ENCODE measurements at regions of chr5 and their contacts with region 1.

Region 1: DNA sequence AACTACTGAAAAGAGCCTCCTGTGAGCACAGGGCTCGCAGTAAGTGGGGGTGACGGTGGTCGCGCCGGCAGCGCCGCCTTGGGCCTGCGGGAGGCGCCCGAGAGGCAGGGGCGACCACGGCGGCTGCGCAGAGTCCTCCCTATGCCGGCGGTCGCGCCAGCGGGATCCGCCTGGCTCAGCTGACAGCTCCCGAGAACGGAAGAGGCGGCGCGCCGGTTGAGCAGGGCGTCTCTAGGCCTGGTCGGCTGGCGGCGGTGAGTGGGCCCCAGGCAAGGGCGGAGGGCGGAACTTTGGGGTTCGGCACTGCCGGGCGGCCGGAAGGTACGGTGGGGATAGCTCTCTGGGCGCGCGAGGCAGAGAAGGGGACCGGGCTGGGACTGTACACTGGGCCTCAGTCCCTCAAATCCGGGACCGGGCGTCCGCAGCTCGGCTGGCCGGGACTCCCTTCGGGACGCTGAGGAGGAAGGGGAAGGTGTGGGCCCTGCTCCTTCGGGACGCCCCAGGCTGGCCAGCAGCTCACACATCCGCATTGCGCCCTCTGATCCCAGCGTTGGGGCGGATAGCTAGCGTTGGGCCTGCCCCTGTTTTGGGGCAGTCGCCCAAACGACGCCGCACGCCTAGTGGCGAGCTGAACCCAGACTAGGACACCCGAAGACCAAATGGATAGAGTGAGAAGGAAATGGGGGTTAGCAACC is at the start of gene RNF14:
- DNase-seq: peak; percentile 96
- H3K4me3 Mint-ChIP-seq: peak within 1 kb of the TSS; percentile 93
- H3K27ac Mint-ChIP-seq: peak within 1 kb of the TSS; percentile 91
- H3K4me1 Mint-ChIP-seq: peaks cover 37% of the 10 kb centered on the region
- H3K27me3 Mint-ChIP-seq: no peaks in the 10 kb centered on the region
- total RNA-seq, gene RNF14: 29.8 to 35.6 TPM

Region 2: DNA sequence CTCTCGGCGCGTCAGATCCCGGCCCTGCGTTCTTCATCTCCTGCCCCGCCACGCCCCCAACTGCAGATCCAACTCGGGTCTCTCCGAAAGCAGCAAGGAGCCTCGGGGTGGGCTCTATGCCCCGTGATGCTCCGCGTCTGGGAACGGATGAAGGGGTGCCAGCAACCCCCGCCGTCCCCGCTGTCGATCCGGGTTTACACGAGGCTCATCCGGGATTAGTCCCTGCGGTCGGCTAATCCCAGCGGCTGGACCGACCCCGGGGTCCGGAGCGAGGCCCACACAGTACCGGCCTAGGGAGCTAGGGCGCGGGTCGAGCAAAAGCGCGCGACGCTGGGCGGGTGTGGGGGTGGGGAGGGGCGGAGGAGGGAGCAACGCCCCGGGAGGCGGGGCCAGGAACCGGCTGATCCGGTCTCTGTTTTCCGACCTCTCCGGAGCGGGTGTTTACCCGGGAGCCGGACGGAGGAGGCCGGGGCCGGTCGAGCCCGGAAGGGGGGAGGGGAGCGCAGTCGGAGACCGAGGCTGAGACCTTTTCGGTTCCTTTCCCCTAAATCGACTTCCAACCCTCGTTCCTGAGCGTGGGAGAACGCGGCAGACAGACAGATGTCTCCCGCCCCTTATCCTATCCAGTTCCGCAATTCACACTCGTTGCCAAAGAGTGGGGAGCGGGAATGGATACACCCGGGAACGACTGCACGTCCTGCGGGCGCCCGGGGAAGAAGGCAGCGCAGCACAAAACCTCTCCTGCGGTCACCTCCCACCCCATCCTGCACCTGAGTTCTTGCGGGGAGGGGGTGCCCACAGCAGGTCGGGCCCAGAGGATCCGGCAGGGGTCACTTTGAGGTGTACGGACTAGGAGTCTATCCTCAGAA is 119.5 kb before region 1 on chr5:
- CTCF ChIA-PET with region 1: no interaction called
- intact Hi-C with region 1: loop called (anchors 1 kb)
- DNase-seq: peak; percentile 84
- H3K4me3 Mint-ChIP-seq: peak overlapping the region; percentile 86
- H3K27ac Mint-ChIP-seq: peak overlapping the region; percentile 75
- H3K4me1 Mint-ChIP-seq: peaks cover 16% of the 10 kb centered on the region
- H3K27me3 Mint-ChIP-seq: no peaks in the 10 kb centered on the region

Region 3: DNA sequence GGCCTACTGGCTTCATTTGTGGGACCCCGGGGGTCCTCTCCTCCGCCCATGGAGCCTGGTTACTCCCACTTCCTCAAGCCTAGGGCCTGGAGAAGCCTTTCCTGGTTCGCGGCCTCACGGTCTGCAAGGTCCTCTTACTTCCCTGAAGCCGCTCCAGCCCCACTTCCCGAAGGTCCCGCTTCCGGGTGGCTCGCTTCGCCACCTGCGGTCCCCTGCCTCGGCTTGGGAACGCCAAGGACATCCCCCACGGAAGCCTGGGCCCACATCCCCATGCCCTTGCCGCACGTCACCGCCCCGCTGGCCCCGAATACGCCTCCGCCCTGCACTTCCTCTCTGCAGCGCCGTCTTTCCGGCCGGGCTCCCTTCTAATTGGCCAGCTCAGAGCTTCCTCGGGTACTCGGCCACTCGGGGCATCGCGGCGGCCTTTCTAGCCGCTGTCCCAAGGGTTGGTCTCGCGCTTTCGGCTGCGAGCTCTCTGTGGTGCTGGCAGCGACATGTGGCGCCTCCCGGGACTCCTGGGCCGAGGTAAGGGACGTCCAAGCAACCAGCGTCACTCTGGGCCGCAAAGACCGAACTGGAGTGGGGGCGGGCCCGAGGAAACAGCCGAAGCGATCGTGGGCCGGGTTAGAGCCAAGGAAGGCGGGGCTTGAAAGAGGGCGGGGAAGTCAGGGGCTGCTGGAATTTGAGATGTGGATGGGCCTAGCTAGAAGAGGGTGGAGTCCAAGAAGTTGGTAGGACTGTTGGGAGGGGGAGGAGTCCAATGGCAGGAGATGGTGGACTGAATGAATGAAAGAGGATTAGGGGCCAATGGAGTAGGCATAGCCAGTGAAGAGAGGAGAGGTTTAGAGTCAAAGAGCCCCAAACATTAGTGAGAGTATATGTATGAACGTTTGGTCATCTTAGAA is 45.4 kb before region 1 on chr5 and contains the start of gene DELE1:
- CTCF ChIA-PET with region 1: no interaction called
- intact Hi-C with region 1: loop called (anchors 1 kb)
- DNase-seq: peak; percentile 95
- H3K4me3 Mint-ChIP-seq: peak within 1 kb of the TSS; percentile 90
- H3K27ac Mint-ChIP-seq: peak within 1 kb of the TSS; percentile 93
- H3K4me1 Mint-ChIP-seq: peaks cover 18% of the 10 kb centered on the region
- H3K27me3 Mint-ChIP-seq: no peaks in the 10 kb centered on the region
- total RNA-seq, gene DELE1: 48.0 to 50.6 TPM

Region 4: DNA sequence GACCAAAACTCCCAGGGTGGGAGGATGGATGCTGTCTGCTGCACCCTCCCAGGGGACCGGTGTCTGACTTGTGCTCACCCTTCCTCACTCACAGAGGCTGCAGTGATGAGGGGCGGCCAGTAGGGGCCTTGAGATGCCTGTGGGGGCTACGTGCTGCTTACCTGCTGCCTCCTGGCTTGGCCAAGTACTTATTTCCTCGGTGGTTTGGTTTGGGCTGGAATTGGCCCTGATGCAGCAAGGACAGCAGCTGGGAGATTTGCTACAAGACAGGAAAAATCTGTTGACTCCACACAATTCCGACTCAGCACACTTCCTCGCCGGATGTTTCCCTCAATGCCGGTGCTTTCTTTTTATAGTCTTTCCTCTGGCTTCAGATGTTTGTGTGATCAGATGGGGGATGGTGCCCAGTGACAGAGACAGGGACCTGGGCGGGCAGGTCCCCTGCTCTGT is 17.7 kb before region 1 on chr5:
- CTCF ChIA-PET with region 1: interaction called, 115 read pairs
- intact Hi-C with region 1: no loop called
- DNase-seq: peak; percentile 41
- H3K4me3 Mint-ChIP-seq: no peak overlapping the region
- H3K27ac Mint-ChIP-seq: no peak overlapping the region
- H3K4me1 Mint-ChIP-seq: peaks cover 7% of the 10 kb centered on the region
- H3K27me3 Mint-ChIP-seq: no peaks in the 10 kb centered on the region

Region 5: GRCh38 chr5:142006363-142007236 is 37.5 kb after region 1 on chr5:
- CTCF ChIA-PET with region 1: interaction called, 23 read pairs
- intact Hi-C with region 1: loop called (anchors 1 kb)
- DNase-seq: peak; percentile 86
- H3K4me3 Mint-ChIP-seq: peak overlapping the region; percentile 69
- H3K27ac Mint-ChIP-seq: peak overlapping the region; percentile 100
- H3K4me1 Mint-ChIP-seq: peaks cover 87% of the 10 kb centered on the region
- H3K27me3 Mint-ChIP-seq: no peaks in the 10 kb centered on the region

Measured in activated naive CD4-positive, alpha-beta T cell treated with anti-CD3 and anti-CD28 coated beads for 36 hours (primary cell).